ENCODE measurements at regions of chr14 and their contacts with region 1.

Region 1: GRCh38 chr14:94136575-94137331 is 7.3 kb upstream of the IFI27L2 start:
- DNase-seq: peak; percentile 89
- H3K4me3 Mint-ChIP-seq: no peak overlapping the region
- H3K27ac Mint-ChIP-seq: no peak overlapping the region
- H3K4me1 Mint-ChIP-seq: peaks cover 15% of the 10 kb centered on the region
- H3K27me3 Mint-ChIP-seq: peaks cover 21% of the 10 kb centered on the region

Region 2: GRCh38 chr14:93970549-93970946 is 166.2 kb before region 1 on chr14:
- CTCF ChIA-PET with region 1: interaction called, 11 read pairs
- POLR2A ChIA-PET with region 1: no interaction called
- DNase-seq: peak; percentile 80
- H3K4me3 Mint-ChIP-seq: peak overlapping the region; percentile 80
- H3K27ac Mint-ChIP-seq: peak overlapping the region; percentile 94
- H3K4me1 Mint-ChIP-seq: peaks cover 89% of the 10 kb centered on the region
- H3K27me3 Mint-ChIP-seq: no peaks in the 10 kb centered on the region

Region 3: DNA sequence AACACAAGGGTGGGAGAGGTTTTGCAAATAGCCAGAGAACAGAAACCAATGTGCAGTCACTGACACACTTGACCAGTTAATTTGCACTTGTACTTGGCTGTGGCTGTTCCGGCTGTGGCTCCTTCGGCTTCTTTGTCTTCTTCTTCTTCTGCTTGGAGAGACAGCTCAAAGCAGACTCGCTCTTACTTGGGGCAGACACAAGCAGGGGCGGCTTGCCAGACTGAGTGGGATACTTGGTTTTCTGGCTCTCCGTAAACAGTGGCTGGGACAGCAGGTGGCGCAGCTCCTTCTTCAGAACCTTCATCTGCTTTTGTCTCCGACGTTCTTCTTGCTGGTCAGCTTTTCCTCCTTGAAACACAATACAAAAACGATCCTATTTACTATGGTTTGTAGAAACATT is 85.6 kb before region 1 on chr14:
- CTCF ChIA-PET with region 1: interaction called, 29 read pairs
- POLR2A ChIA-PET with region 1: no interaction called
- DNase-seq: peak; percentile 16
- H3K4me3 Mint-ChIP-seq: no peak overlapping the region
- H3K27ac Mint-ChIP-seq: peak overlapping the region; percentile 5
- H3K4me1 Mint-ChIP-seq: peaks cover 39% of the 10 kb centered on the region
- H3K27me3 Mint-ChIP-seq: no peaks in the 10 kb centered on the region

Region 4: GRCh38 chr14:94080471-94081289 is 56.1 kb before region 1 on chr14 and contains the start of gene DDX24:
- CTCF ChIA-PET with region 1: interaction called, 18 read pairs
- POLR2A ChIA-PET with region 1: interaction called, 13 read pairs
- DNase-seq: peak; percentile 98
- H3K4me3 Mint-ChIP-seq: peak within 1 kb of the TSS; percentile 98
- H3K27ac Mint-ChIP-seq: peak within 1 kb of the TSS; percentile 98
- H3K4me1 Mint-ChIP-seq: peaks cover 61% of the 10 kb centered on the region
- H3K27me3 Mint-ChIP-seq: no peaks in the 10 kb centered on the region
- total RNA-seq, gene DDX24: 210 to 216 TPM

Region 5: GRCh38 chr14:94173885-94174603 is 37.3 kb after region 1 on chr14 and contains the start of gene PPP4R4:
- CTCF ChIA-PET with region 1: interaction called, 76 read pairs
- POLR2A ChIA-PET with region 1: interaction called, 23 read pairs
- DNase-seq: peak; percentile 92
- H3K4me3 Mint-ChIP-seq: peak within 1 kb of the TSS; percentile 77
- H3K27ac Mint-ChIP-seq: peak within 1 kb of the TSS; percentile 62
- H3K4me1 Mint-ChIP-seq: peaks cover 27% of the 10 kb centered on the region
- H3K27me3 Mint-ChIP-seq: peaks cover 37% of the 10 kb centered on the region
- total RNA-seq, gene PPP4R4: 3.3 to 4.9 TPM

Measured in activated CD4-positive, alpha-beta memory T cell treated with anti-CD3 and anti-CD28 coated beads, Interleukin-2, amount 10 ng/mL, durations not matched to agents 7 days and 5 days (primary cell).